Calu3 (cell line): ENCODE measurements at regions of chr2 and their contacts with region 1.

Region 1: DNA sequence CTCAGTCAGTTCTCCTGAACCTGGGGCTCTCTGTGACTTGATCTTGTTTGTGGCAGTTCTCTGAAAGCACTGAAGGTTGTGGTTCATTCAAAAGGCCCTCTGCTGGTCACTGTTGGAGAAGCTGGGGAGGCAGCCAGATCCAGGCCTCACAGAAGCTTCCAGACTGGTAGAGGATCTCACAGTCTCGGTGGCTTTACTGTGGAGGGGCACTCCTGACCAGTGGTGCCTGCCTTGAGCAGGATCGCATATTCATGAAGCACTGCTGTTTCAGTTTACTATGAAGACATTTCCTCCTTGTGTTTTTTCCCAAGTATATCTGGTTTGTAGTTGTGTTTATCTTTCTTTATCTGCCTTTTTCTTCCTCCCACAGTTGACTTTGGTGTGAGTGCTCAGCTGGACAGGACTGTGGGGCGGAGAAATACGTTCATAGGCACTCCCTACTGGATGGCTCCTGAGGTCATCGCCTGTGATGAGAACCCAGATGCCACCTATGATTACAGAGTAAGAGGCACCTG is 133.9 kb downstream of the MAP4K4 start:
- DNase-seq: peak; percentile 73
- H3K4me3 Mint-ChIP-seq: peak overlapping the region; percentile 30
- H3K27ac Mint-ChIP-seq: peak overlapping the region; percentile 87
- H3K4me1 Mint-ChIP-seq: peaks cover 52% of the 10 kb centered on the region
- H3K27me3 Mint-ChIP-seq: no peaks in the 10 kb centered on the region
- CTCF ChIP-seq: peak; percentile 64

Region 2: DNA sequence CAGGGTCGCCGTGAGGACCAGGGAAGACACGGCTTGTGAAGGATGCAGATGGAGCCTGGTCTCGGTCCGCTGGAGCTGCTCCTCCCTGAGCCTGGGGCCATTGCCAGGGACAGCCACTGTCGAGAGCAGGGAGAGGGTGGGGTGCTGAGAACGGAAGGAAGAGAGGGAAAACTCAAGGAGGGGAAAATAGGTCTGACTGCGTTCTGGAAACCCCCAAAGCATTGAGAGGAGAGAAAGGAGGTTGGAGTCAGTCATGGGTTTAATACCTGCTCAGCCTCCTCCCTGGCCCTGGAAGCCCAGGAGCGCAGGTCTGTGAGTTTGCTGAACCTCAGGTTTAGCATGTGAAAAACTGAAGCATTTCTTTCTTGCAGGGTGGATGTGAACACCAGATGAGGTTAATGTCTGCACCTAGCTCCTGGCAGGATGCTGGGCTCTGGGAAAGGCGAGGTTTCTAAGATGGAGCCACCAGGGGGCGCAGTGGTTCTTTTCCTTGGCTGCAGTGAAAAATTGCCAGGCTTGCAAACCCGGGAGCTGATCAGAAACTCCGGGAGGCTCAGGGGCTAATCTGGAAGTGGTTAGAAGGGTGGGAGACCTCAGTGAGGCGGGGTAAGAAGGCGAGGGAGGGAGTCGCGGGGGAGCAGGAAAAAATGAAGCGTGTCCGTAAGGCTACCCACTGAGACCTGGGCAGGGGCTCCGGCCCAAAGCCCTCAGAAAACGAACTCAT is 489.3 kb before region 1 on chr2:
- CTCF ChIA-PET with region 1: interaction called, 7 read pairs
- intact Hi-C with region 1: loop called (anchors 2 kb)
- DNase-seq: peak; percentile 84
- H3K4me3 Mint-ChIP-seq: no peak overlapping the region
- H3K27ac Mint-ChIP-seq: no peak overlapping the region
- H3K4me1 Mint-ChIP-seq: peaks cover 34% of the 10 kb centered on the region
- H3K27me3 Mint-ChIP-seq: no peaks in the 10 kb centered on the region
- CTCF ChIP-seq: peak; percentile 74

Region 3: DNA sequence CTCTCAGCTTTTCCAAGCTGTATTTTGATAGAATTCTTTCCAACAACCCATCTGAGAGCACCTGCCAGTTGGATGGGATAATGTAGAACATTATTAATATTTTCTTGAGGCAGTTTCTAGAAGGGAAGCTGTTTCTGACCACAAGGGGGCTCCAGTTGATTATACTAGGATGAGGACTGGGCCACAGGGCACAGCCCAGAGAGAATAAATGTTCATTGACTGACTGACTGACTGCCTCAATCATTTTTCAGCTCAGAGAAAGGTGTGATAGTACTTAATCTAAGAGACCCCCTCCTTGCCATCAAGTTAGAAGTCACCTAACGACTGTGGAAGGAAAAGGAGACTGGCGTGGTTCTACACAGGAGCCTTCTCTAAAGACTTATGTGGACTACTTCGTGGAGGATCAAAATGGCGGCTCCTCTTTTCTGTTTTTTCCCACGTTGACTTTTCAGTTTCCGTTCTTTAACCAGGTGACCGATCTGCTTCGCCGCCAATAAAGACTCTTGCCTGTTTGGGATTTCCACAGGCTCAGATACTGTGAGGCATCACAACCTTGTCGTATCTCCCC is 412.2 kb before region 1 on chr2:
- CTCF ChIA-PET with region 1: interaction called, 12 read pairs
- intact Hi-C with region 1: loop called (anchors 1 kb)
- DNase-seq: peak; percentile 67
- H3K4me3 Mint-ChIP-seq: no peak overlapping the region
- H3K27ac Mint-ChIP-seq: no peak overlapping the region
- H3K4me1 Mint-ChIP-seq: no peaks in the 10 kb centered on the region
- H3K27me3 Mint-ChIP-seq: no peaks in the 10 kb centered on the region
- CTCF ChIP-seq: peak; percentile 61

Region 4: DNA sequence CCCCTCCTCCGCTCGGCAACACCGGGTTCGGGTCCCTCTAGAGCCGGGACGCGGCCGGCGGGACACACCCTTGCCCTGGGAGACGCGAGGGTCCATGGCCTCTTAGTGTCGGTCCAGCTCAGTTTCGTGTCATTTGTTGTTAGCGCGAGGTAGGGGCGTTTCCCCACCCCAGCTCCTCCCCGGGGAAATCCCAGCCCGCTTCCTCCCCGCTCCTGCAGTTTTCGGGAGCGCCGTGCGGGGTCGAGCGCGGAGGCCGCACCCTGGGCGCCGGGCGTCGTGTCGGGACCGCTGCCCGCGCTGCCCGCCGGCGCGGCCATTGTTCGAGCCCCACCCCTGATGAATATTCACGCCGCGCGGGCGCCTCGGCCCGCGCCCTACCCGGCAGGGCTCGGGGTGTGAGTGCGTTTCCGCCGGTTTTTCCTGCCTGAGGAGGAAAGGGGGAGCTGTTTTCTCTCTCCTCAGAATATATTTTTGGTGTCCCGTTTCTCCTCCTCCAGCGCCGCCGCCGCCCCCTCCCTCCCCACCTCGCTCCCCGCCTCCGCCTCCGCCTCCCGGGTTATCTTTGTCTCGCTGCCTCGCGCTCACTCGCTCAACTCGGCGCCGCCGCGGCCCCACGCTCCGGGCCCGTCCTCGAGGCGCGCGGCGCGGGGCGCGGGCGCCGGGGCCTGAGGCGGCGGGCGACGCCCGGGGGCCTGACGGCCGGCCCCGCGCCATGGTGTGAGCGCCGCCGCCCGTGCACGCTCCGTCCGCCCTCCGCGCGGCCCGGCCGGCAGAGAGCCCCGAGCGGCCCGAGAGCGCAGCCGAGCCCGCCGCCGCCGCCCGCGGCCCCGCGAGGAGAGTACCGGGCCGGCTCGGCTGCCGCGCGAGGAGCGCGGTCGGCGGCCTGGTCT is 134.0 kb before region 1 on chr2 and contains the start of gene MAP4K4:
- CTCF ChIA-PET with region 1: no interaction called
- intact Hi-C with region 1: loop called (anchors 2 kb)
- DNase-seq: peak; percentile 81
- H3K4me3 Mint-ChIP-seq: no peak within 1 kb of the TSS
- H3K27ac Mint-ChIP-seq: peak within 1 kb of the TSS; percentile 86
- H3K4me1 Mint-ChIP-seq: peaks cover 31% of the 10 kb centered on the region
- H3K27me3 Mint-ChIP-seq: no peaks in the 10 kb centered on the region
- CTCF ChIP-seq: no peak
- total RNA-seq, gene MAP4K4: 136 and 151 TPM in 2 replicates

Region 5: GRCh38 chr2:101770726-101771125 is 60.7 kb before region 1 on chr2:
- CTCF ChIA-PET with region 1: interaction called, 17 read pairs
- intact Hi-C with region 1: loop called (anchors 1 kb)
- DNase-seq: peak; percentile 51
- H3K4me3 Mint-ChIP-seq: no peak overlapping the region
- H3K27ac Mint-ChIP-seq: peak overlapping the region; percentile 61
- H3K4me1 Mint-ChIP-seq: peaks cover 58% of the 10 kb centered on the region
- H3K27me3 Mint-ChIP-seq: no peaks in the 10 kb centered on the region
- CTCF ChIP-seq: no peak

Region 6: DNA sequence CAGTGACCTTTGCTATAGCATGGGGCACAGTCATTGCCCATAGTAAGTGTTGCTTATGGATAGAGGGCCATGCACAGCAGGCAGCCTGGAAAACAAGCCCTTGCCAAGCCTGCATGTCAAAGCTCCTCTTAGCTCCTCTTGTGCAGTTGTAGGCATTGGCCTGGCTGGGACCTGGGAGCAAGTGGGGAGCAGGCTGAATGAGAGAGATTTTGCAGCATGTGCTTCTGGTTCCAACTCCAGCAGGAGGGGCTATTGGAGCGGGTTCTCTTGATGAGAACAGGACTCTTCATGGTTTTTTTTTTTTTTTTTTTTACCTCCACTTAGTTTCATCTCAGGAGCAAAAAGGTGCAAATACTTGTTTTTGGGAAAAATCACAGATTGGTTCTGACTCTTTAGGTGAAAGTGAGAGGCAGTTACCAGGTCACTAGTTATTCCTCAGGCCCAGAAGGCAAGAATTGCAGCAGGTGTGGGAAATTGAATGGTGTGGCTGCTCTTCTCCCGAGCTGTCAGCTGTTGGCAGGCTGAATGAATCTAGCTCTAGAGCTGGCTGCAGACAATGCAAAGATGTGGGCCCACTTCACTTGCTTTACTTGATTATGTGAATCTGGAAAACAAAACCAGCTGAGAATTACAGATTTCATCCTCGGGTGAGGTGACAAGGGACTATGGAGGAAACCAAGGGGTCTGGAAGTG is 38.0 kb before region 1 on chr2:
- CTCF ChIA-PET with region 1: interaction called, 12 read pairs
- intact Hi-C with region 1: no loop called
- DNase-seq: no peak
- H3K4me3 Mint-ChIP-seq: no peak overlapping the region
- H3K27ac Mint-ChIP-seq: no peak overlapping the region
- H3K4me1 Mint-ChIP-seq: peaks cover 34% of the 10 kb centered on the region
- H3K27me3 Mint-ChIP-seq: no peaks in the 10 kb centered on the region
- CTCF ChIP-seq: no peak